A673 (cell line): ENCODE measurements at regions of chr11 and their contacts with region 1.

Region 1: DNA sequence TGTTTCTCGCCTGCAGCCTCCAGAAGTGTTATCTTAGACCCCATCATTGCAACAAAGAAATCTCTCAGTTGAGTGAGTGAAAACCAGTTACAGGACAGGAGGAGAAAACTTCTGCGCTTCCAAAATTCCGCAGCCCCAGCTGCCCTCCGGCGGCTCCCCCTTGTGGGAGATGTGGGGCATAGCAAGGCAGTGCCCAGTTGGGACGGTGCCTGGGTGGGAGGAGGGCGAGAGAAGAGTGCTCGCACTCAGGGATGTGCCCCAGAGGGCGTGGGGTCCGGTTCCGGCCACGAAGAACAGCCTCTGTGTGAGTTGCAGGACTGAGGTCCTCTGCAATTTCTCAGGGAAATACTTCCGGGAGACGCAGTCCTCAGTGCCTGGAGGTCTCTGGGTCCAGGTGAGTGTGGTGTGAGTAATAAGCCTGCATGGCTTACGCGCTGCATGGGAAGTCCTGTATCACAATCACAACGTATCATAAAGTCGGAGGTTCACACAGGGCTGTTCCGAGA is 87.0 kb upstream of the BLID start:
- DNase-seq: peak; percentile 90
- H3K4me3 ChIP-seq: peak overlapping the region; percentile 39
- H3K27ac ChIP-seq: no peak overlapping the region
- H3K4me1 ChIP-seq: peaks cover 17% of the 10 kb centered on the region
- H3K27me3 ChIP-seq: no peaks in the 10 kb centered on the region
- CTCF ChIP-seq: peak; percentile 99

Region 2: GRCh38 chr11:121929581-121929980 is 273.4 kb before region 1 on chr11:
- CTCF ChIA-PET with region 1: no interaction called
- POLR2A ChIA-PET with region 1: no interaction called
- intact Hi-C with region 1: loop called (anchors 10 kb)
- DNase-seq: peak; percentile 96
- H3K4me3 ChIP-seq: peak overlapping the region; percentile 38
- H3K27ac ChIP-seq: peak overlapping the region; percentile 79
- H3K4me1 ChIP-seq: peaks cover 28% of the 10 kb centered on the region
- H3K27me3 ChIP-seq: no peaks in the 10 kb centered on the region
- CTCF ChIP-seq: no peak

Region 3: GRCh38 chr11:122020902-122021301 is 182.1 kb before region 1 on chr11:
- CTCF ChIA-PET with region 1: interaction called, 3 read pairs
- POLR2A ChIA-PET with region 1: no interaction called
- intact Hi-C with region 1: loop called (anchors 2 kb)
- DNase-seq: peak; percentile 70
- H3K4me3 ChIP-seq: no peak overlapping the region
- H3K27ac ChIP-seq: no peak overlapping the region
- H3K4me1 ChIP-seq: peaks cover 7% of the 10 kb centered on the region
- H3K27me3 ChIP-seq: no peaks in the 10 kb centered on the region
- CTCF ChIP-seq: peak; percentile 82

Region 4: DNA sequence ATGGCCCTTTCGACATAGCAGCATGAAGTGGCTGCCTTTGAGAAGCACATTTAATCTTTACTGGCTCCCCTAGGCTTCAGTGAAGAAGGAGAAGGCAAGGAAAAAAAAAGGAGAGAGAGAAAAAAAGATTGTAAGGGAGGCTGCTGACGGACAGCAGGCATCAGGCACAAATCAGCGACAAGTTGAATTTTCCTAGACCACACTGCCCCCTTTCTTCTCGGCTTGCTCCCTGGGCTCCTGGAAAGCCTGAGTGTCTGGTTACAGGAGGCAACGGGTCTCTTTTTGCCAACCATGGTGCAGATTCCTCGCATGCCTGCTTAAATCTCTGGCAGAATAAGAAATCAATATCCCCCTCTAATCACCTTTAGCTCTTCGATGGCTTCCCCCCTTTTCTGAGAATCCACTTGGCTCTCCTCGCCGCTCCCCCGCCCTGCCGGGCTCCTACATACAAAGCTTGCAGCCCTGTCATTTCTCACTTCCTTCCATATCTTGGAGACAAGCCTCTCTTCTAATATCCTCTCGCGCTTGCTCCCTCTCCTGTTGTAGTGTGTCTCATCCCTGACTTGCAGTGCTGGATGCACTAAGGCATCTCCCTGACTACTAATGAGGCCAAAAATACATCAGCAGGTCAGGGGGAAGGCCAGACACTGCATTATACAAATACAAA is 101.2 kb before region 1 on chr11:
- CTCF ChIA-PET with region 1: interaction called, 7 read pairs
- POLR2A ChIA-PET with region 1: no interaction called
- intact Hi-C with region 1: loop called (anchors 2 kb)
- DNase-seq: peak; percentile 93
- H3K4me3 ChIP-seq: peak overlapping the region; percentile 64
- H3K27ac ChIP-seq: peak overlapping the region; percentile 78
- H3K4me1 ChIP-seq: peaks cover 48% of the 10 kb centered on the region
- H3K27me3 ChIP-seq: no peaks in the 10 kb centered on the region
- CTCF ChIP-seq: peak; percentile 88

Region 5: GRCh38 chr11:122108192-122108799 is 94.7 kb before region 1 on chr11:
- CTCF ChIA-PET with region 1: interaction called, 20 read pairs
- POLR2A ChIA-PET with region 1: no interaction called
- intact Hi-C with region 1: loop called (anchors 1 kb)
- DNase-seq: peak; percentile 87
- H3K4me3 ChIP-seq: no peak overlapping the region
- H3K27ac ChIP-seq: no peak overlapping the region
- H3K4me1 ChIP-seq: peaks cover 32% of the 10 kb centered on the region
- H3K27me3 ChIP-seq: no peaks in the 10 kb centered on the region
- CTCF ChIP-seq: peak; percentile 97

Region 6: GRCh38 chr11:122159173-122159721 is 43.8 kb before region 1 on chr11:
- CTCF ChIA-PET with region 1: no interaction called
- POLR2A ChIA-PET with region 1: no interaction called
- intact Hi-C with region 1: loop called (anchors 5 kb)
- DNase-seq: peak; percentile 90
- H3K4me3 ChIP-seq: peak overlapping the region; percentile 49
- H3K27ac ChIP-seq: peak overlapping the region; percentile 81
- H3K4me1 ChIP-seq: peaks cover 38% of the 10 kb centered on the region
- H3K27me3 ChIP-seq: no peaks in the 10 kb centered on the region
- CTCF ChIP-seq: no peak